Right ventricle myocardium inferior (tissue), 1 donor: ENCODE measurements at regions of chr9 and their contacts with region 1.

Region 1: GRCh38 chr9:120619751-120620655 is 40.0 kb upstream of the CDK5RAP2 start:
- DNase-seq: no peak
- ATAC-seq: peak; percentile 84

Region 2: GRCh38 chr9:120714088-120714845 is 94.3 kb after region 1 on chr9 and contains the start of gene MEGF9:
- intact Hi-C with region 1: loop called (anchors 5 kb)
- DNase-seq: peak; percentile 99
- ATAC-seq: peak; percentile 98
- total RNA-seq, gene MEGF9: 25.2 TPM

Region 3: GRCh38 chr9:120730661-120731514 is 110.9 kb after region 1 on chr9:
- intact Hi-C with region 1: loop called (anchors 10 kb)
- DNase-seq: no peak
- ATAC-seq: peak; percentile 84